HepG2 (cell line): ENCODE measurements at regions of chr17 and their contacts with region 1.

Region 1: GRCh38 chr17:31378638-31379037 is 12.8 kb upstream of the RAB11FIP4 start:
- DNase-seq: no peak
- ATAC-seq: no peak
- H3K4me3 ChIP-seq: no peak overlapping the region
- H3K27ac ChIP-seq: no peak overlapping the region
- H3K4me1 ChIP-seq: peaks cover 32% of the 10 kb centered on the region
- H3K27me3 ChIP-seq: no peaks in the 10 kb centered on the region
- CTCF ChIP-seq: no peak
- EP300 ChIP-seq: no peak
- POLR2A ChIP-seq: no peak
- RAD21 ChIP-seq: no peak

Region 2: GRCh38 chr17:31274252-31274651 is 104.4 kb before region 1 on chr17:
- CTCF ChIA-PET with region 1: no interaction called
- POLR2A ChIA-PET with region 1: no interaction called
- in situ Hi-C with region 1: no loop called
- intact Hi-C with region 1: loop called (anchors 5 kb)
- DNase-seq: peak; percentile 39
- ATAC-seq: 0 out of 3 replicates have a peak, but pooled peaks have one; percentile 31
- H3K4me3 ChIP-seq: no peak overlapping the region
- H3K27ac ChIP-seq: peak overlapping the region; percentile 22
- H3K4me1 ChIP-seq: peaks cover 20% of the 10 kb centered on the region
- H3K27me3 ChIP-seq: no peaks in the 10 kb centered on the region
- CTCF ChIP-seq: no peak
- EP300 ChIP-seq: no peak
- POLR2A ChIP-seq: no peak
- RAD21 ChIP-seq: no peak

Region 3: DNA sequence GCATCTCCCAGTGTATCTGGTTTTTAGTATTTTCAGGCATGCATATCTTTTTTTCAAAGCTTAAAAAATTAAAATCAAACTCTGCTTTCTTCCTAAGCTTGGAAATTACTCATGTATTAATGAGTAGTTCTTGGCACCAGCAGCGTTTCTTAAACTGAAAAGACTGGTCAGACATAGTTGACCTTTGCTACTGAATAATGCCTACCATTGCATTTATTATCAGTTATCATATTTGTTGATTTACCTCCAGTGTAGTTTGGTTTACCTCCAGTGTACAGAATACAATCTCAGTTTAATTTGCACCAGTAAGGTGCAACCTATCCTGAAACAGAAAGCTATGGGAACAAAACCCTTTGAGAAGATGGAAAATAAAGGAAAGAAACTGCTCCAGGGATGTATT is 22.7 kb before region 1 on chr17:
- CTCF ChIA-PET with region 1: no interaction called
- POLR2A ChIA-PET with region 1: no interaction called
- in situ Hi-C with region 1: no loop called
- intact Hi-C with region 1: loop called (anchors 1 kb)
- DNase-seq: no peak
- ATAC-seq: no peak
- H3K4me3 ChIP-seq: no peak overlapping the region
- H3K27ac ChIP-seq: no peak overlapping the region
- H3K4me1 ChIP-seq: no peaks in the 10 kb centered on the region
- H3K27me3 ChIP-seq: no peaks in the 10 kb centered on the region
- CTCF ChIP-seq: no peak
- EP300 ChIP-seq: no peak
- POLR2A ChIP-seq: no peak
- RAD21 ChIP-seq: no peak